Activated T-helper 1 cell treated with anti-CD3 and anti-CD28 coated beads, Interleukin-12 subunit alpha, Interleukin-12 subunit beta, Interleukin-2, Interleukin-4 antibody, amounts not matched to agents 30 ng/mL and 10 ng/mL and 1 ng/mL, durations not matched to agents 14 hours and 24 hours and 36 hours (primary cell): ENCODE measurements at regions of chr18 and their contacts with region 1.

Region 1: DNA sequence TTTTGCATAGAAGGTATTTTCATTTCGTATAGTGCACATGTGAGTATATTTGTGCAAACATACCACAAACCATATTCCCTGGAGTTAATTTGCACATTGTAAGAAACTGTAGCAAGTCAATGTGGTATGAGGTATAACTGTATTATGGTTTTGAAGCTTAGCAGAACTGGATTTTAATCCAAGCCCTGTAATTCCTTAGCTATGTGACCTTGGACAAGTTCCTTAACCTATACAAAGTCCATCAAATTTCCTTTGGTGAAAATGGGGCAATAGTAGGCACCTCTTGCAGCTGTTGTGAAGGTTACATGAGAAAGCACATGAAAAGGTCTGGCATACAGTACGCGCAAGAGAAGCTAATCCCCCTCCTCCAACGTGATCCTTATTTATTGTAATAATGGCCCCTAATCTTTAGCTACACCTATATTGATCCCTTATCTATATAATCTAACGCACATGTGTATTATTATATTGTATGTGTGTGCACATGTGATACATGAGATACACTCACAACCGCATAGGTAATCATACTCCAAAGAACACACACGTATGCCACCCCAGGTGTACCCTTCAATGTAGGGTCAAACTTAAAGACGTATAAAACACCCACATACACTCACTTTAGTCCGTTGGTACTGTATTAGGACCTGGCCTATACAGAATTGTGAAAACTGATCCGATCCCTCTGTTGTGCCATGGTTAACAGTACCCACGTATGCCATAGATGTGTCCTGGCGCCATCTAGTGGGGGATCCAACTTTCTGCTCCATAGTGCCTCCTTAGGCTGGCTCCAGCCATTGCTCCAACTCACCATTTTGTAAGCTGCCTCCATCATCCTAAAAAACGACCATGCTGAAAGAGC is 402.9 kb upstream of the SLC14A2 start:
- DNase-seq: peak; percentile 62
- H3K4me3 Mint-ChIP-seq: no peak overlapping the region
- H3K27ac Mint-ChIP-seq: no peak overlapping the region
- H3K4me1 Mint-ChIP-seq: no peaks in the 10 kb centered on the region
- H3K27me3 Mint-ChIP-seq: peaks cover 7% of the 10 kb centered on the region

Region 2: DNA sequence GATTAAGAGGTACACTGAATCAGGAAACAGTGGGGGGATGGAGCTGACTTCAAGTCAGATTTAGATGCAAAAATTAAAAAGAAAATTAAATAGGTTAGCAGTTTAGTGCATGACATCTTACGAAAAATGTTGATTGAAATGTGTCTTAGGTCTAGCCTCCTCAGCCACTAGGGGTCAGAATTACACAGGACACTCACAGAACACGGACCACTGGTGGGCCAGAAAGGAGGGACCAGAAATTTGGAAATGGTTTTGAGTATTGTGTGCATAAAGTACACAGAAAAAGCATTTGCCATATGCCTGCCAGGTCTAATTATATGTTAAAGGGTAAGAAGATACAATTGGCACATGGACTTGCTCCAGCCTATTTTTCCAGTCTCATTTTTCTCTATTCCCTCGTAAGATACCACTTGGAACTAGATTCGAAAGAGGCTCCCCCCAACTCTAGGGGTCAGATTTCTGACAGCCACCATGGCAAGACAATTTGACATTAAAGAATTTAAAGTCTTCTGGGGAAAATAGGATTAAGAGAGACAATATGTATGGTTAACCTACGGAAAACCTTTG is 1082.0 kb before region 1 on chr18:
- intact Hi-C with region 1: loop called (anchors 1 kb)
- DNase-seq: no peak
- H3K4me3 Mint-ChIP-seq: no peak overlapping the region
- H3K27ac Mint-ChIP-seq: no peak overlapping the region
- H3K4me1 Mint-ChIP-seq: no peaks in the 10 kb centered on the region
- H3K27me3 Mint-ChIP-seq: no peaks in the 10 kb centered on the region

Region 3: GRCh38 chr18:44579028-44579702 is 633.2 kb before region 1 on chr18:
- intact Hi-C with region 1: loop called (anchors 1 kb)
- DNase-seq: no peak
- H3K4me3 Mint-ChIP-seq: no peak overlapping the region
- H3K27ac Mint-ChIP-seq: no peak overlapping the region
- H3K4me1 Mint-ChIP-seq: no peaks in the 10 kb centered on the region
- H3K27me3 Mint-ChIP-seq: peaks cover 3% of the 10 kb centered on the region

Region 4: GRCh38 chr18:44895176-44895798 is 317.1 kb before region 1 on chr18:
- intact Hi-C with region 1: loop called (anchors 5 kb)
- DNase-seq: peak; percentile 15
- H3K4me3 Mint-ChIP-seq: no peak overlapping the region
- H3K27ac Mint-ChIP-seq: peak overlapping the region; percentile 61
- H3K4me1 Mint-ChIP-seq: peaks cover 61% of the 10 kb centered on the region
- H3K27me3 Mint-ChIP-seq: peaks cover 4% of the 10 kb centered on the region

Region 5: DNA sequence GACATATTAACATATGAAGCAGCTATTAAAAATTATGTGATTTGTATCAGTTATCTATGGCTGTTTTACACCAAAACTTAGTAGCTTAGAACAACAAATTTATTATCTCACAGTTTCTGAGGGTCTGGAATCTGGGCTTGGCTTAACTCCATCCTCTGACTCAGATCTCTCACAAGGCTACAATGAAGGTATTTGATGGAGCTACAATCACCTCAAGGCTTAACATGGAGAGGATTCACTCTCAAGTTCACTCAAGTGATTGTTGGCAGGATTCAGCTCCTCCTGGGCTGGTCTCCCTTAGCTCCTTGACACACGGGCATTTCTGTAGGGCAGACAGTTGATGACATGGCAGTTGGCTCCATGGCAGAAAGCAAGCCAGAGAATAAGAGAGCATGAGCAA is 269.9 kb after region 1 on chr18:
- intact Hi-C with region 1: no loop called
- DNase-seq: no peak
- H3K4me3 Mint-ChIP-seq: no peak overlapping the region
- H3K27ac Mint-ChIP-seq: no peak overlapping the region
- H3K4me1 Mint-ChIP-seq: no peaks in the 10 kb centered on the region
- H3K27me3 Mint-ChIP-seq: peaks cover 3% of the 10 kb centered on the region